Panc1 (cell line): ENCODE measurements at regions of chr14 and their contacts with region 1.

Region 1: GRCh38 chr14:23120541-23121251 is 1.6 kb upstream of the CEBPE start:
- DNase-seq: peak; percentile 72
- ATAC-seq: peak; percentile 94
- H3K4me3 ChIP-seq: no peak overlapping the region
- H3K27ac ChIP-seq: no peak overlapping the region
- H3K4me1 ChIP-seq: no peaks in the 10 kb centered on the region
- H3K27me3 ChIP-seq: no peaks in the 10 kb centered on the region
- CTCF ChIP-seq: peak; percentile 98

Region 2: GRCh38 chr14:23186913-23187654 is 66.4 kb after region 1 on chr14:
- CTCF ChIA-PET with region 1: interaction called, 30 read pairs
- POLR2A ChIA-PET with region 1: no interaction called
- in situ Hi-C with region 1: no loop called
- intact Hi-C with region 1: loop called (anchors 1 kb)
- DNase-seq: peak; percentile 30
- ATAC-seq: peak; percentile 79; the same call in 1 of the 2 replicates
- H3K4me3 ChIP-seq: no peak overlapping the region
- H3K27ac ChIP-seq: no peak overlapping the region
- H3K4me1 ChIP-seq: no peaks in the 10 kb centered on the region; the same call in 1 of the 2 replicates
- H3K27me3 ChIP-seq: peaks cover 4% of the 10 kb centered on the region
- CTCF ChIP-seq: peak; percentile 76